ENCODE measurements at regions of chr18 and their contacts with region 1.

Region 1: DNA sequence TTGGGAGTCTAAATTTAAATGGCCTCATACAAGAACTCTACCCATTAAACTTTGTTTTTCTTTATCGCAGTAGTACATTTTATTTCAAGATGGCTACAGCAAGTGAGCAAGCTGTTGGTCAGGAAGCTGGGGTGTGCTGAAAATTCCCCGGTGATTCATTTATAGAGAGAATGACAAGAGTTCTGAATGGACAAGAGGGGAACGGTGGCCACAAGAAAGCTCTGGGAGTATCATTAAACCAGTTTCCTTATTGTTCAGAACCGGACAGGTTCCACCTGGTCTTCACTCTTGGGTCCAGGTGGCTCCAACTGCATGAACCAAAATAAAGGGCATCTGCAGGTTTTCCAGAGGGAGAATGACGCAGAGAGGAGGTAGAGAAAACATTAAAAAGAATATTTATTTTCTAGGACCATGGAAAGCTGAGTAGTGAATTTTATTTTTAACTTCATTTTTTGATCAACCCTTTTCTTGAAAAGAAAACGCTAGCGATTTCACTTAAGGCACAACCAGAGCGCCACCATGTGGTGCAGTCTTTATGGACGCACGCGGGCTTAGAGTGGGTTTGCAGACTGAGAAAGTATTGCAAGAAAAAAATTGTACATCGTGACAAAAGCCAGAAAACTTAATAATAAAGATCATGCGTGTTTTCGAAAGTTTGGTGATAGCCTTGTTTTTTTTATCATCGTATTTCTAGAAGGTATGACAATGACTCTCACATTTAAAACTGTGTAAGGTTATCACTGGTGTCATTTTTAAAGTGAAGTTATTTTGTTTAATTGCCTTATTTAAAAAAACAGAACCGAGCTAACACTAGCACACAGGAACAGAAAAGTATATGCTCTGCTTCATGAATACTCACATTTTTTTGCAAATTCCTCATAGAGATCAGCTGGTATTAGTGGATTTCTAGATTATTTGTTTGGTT is 97.9 kb upstream of the NOL4 start:
- DNase-seq: peak; percentile 59
- ATAC-seq: peak; percentile 75
- H3K4me3 ChIP-seq: no peak overlapping the region
- H3K27ac ChIP-seq: no peak overlapping the region
- H3K4me1 ChIP-seq: no peaks in the 10 kb centered on the region
- H3K27me3 ChIP-seq: no peaks in the 10 kb centered on the region
- CTCF ChIP-seq: peak; percentile 70
- EP300 ChIP-seq: no peak
- POLR2A ChIP-seq: no peak
- RAD21 ChIP-seq: peak; percentile 17; the same call in 1 of the 2 replicates

Region 2: GRCh38 chr18:33839441-33840211 is 483.0 kb before region 1 on chr18:
- CTCF ChIA-PET with region 1: interaction called, 4 read pairs
- POLR2A ChIA-PET with region 1: no interaction called
- in situ Hi-C with region 1: loop called (anchors 25 kb)
- intact Hi-C with region 1: loop called (anchors 1 kb)
- DNase-seq: peak; percentile 55
- ATAC-seq: peak; percentile 44; the same call in 1 of the 3 replicates
- H3K4me3 ChIP-seq: no peak overlapping the region
- H3K27ac ChIP-seq: no peak overlapping the region
- H3K4me1 ChIP-seq: no peaks in the 10 kb centered on the region
- H3K27me3 ChIP-seq: no peaks in the 10 kb centered on the region
- CTCF ChIP-seq: peak; percentile 55
- EP300 ChIP-seq: no peak
- POLR2A ChIP-seq: no peak
- RAD21 ChIP-seq: no peak

Region 3: DNA sequence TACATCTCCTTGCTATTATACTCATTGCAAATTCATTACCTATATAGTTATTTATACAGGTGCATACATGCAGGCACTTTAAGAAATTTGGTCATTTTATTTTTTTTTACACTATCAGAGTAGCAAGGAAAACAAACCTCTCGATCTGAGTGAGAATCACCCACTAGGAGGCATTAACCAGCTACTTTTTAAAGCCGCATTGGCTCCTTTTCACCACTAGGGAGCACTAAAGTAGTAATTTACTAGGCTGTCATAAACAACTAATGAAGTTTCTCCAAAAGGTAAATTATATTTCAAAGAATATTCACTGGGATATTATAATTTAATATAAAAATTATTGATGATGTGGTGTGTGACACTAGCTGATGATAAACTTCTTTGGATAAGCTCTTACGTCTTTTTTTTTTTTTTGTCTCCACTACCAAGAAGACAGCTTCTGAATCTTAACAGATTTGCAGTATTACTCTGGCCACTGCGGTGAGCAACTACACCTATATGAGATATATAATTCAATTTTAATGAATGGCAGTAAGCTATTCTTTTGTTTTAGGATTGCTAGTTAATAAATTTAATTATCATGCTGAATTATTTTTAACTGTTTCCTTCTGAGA is 199.8 kb before region 1 on chr18:
- CTCF ChIA-PET with region 1: interaction called, 38 read pairs
- POLR2A ChIA-PET with region 1: no interaction called
- in situ Hi-C with region 1: loop called (anchors 5 kb)
- intact Hi-C with region 1: loop called (anchors 1 kb)
- DNase-seq: peak; percentile 36
- ATAC-seq: peak; percentile 73
- H3K4me3 ChIP-seq: no peak overlapping the region
- H3K27ac ChIP-seq: no peak overlapping the region
- H3K4me1 ChIP-seq: peaks cover 13% of the 10 kb centered on the region
- H3K27me3 ChIP-seq: no peaks in the 10 kb centered on the region
- CTCF ChIP-seq: peak; percentile 65
- EP300 ChIP-seq: no peak
- POLR2A ChIP-seq: no peak
- RAD21 ChIP-seq: no peak

Region 4: GRCh38 chr18:34158881-34159690 is 163.5 kb before region 1 on chr18:
- CTCF ChIA-PET with region 1: no interaction called
- POLR2A ChIA-PET with region 1: no interaction called
- in situ Hi-C with region 1: no loop called
- intact Hi-C with region 1: loop called (anchors 10 kb)
- DNase-seq: peak; percentile 2
- ATAC-seq: peak; percentile 97
- H3K4me3 ChIP-seq: no peak overlapping the region; a peak in 1 of 6 replicates
- H3K27ac ChIP-seq: no peak overlapping the region
- H3K4me1 ChIP-seq: no peaks in the 10 kb centered on the region
- H3K27me3 ChIP-seq: peaks cover 0 to 17% of the 10 kb centered on the region in 2 experiments; a peak in 2 of 5 replicates
- CTCF ChIP-seq: peak; percentile 62
- EP300 ChIP-seq: no peak
- POLR2A ChIP-seq: no peak
- RAD21 ChIP-seq: 0 out of 2 replicates have a peak, but pooled peaks have one; percentile 16

Region 5: DNA sequence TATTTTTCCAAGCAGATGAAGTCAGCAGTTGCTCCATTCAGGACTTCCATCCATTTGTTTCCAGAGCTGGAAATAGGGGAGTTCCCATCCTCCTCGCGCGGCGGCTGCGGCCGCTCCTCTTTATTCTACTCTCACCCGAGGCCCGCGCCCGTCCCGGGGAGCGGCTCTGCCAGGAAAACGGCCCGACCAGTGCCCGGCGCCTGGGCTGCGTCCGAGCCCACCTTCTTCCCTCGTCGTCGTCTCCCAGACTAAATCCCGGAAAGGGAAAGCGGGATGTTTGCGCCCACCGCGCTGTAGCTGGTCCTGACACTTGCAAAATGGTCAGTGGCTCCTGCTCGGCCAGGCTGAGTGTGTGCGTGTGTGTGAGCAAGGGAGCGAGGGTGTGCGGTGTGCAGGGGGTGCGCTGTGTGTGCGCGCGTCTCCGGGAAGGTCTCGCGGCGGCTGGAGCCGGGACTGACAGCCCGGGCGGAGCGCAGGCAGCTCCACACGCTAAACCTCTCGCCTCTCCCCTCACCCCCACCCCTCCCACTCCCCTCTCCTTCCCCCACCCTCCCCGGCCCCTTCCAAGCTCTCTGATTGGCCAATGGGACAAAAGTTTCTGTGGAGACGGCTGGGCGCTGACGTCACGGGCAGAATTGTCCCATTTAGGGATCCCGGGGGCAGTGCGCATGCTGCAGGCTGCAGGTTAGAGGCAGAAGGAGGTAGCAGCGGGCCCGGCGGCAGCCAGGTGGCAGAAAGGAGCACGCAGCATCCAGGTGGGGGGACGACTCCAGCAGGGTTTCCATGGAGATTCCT is 98.0 kb before region 1 on chr18 and contains the start of gene NOL4:
- CTCF ChIA-PET with region 1: no interaction called
- POLR2A ChIA-PET with region 1: no interaction called
- in situ Hi-C with region 1: loop called (anchors 10 kb)
- intact Hi-C with region 1: loop called (anchors 5 kb)
- DNase-seq: peak; percentile 51
- ATAC-seq: peak; percentile 87
- H3K4me3 ChIP-seq: peak within 1 kb of the TSS; percentile 46 to 72 (median 55); a peak in 5 of 6 replicates
- H3K27ac ChIP-seq: no peak within 1 kb of the TSS
- H3K4me1 ChIP-seq: peaks cover 45% of the 10 kb centered on the region
- H3K27me3 ChIP-seq: peaks cover 5 to 31% of the 10 kb centered on the region in 2 experiments
- CTCF ChIP-seq: peak; percentile 74
- EP300 ChIP-seq: no peak
- POLR2A ChIP-seq: no peak
- RAD21 ChIP-seq: no peak
- total RNA-seq, gene NOL4: 1.3 and 1.8 TPM in 2 replicates

Measured in HepG2 (cell line).